ENCODE measurements at regions of chr10 and their contacts with region 1.

Region 1: DNA sequence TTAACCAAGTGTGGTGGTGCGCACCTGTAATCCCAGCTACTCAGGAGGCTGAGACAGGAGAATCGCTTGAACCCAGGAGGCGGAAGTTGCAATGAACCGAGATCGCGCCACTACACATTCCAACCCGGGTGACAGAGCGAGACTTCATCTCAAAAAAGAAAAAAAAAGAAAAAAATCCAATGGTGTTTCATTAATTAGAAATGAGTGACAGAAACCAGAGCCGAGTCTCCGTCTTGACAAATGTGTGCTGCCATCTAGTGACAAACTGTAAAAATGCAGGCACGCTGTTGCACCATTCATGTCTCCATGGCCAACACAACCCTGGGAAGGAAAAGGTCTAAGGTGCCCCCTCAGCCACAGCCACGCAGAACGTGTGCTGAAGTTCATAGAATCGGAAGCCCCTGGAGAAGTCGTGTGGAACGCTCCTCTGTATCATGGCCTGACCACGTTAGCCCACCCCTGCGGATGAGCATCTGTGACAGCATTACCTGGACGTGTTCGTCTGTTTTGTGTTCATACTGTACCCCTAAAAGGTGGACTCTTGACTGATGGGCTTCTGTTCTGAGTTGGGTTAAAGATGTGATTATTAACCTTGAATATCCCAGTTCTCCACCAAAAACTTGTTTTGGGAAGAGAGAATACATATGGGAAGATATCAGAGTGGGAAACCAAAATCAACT is 94.9 kb downstream of the LYZL2 start:
- DNase-seq: peak; percentile 46 to 60
- H3K4me3 ChIP-seq: no peak overlapping the region
- H3K27ac ChIP-seq: no peak overlapping the region
- H3K4me1 ChIP-seq: no peaks in the 10 kb centered on the region
- H3K27me3 ChIP-seq: no peaks in the 10 kb centered on the region
- CTCF ChIP-seq: peak; percentile 87

Region 2: GRCh38 chr10:29239569-29240472 is 1294.8 kb before region 1 on chr10:
- CTCF ChIA-PET with region 1: interaction called, 16 read pairs
- POLR2A ChIA-PET with region 1: no interaction called
- intact Hi-C with region 1: no loop called
- DNase-seq: no peak
- H3K4me3 ChIP-seq: no peak overlapping the region
- H3K27ac ChIP-seq: no peak overlapping the region
- H3K4me1 ChIP-seq: no peaks in the 10 kb centered on the region
- H3K27me3 ChIP-seq: no peaks in the 10 kb centered on the region
- CTCF ChIP-seq: peak; percentile 49

Region 3: DNA sequence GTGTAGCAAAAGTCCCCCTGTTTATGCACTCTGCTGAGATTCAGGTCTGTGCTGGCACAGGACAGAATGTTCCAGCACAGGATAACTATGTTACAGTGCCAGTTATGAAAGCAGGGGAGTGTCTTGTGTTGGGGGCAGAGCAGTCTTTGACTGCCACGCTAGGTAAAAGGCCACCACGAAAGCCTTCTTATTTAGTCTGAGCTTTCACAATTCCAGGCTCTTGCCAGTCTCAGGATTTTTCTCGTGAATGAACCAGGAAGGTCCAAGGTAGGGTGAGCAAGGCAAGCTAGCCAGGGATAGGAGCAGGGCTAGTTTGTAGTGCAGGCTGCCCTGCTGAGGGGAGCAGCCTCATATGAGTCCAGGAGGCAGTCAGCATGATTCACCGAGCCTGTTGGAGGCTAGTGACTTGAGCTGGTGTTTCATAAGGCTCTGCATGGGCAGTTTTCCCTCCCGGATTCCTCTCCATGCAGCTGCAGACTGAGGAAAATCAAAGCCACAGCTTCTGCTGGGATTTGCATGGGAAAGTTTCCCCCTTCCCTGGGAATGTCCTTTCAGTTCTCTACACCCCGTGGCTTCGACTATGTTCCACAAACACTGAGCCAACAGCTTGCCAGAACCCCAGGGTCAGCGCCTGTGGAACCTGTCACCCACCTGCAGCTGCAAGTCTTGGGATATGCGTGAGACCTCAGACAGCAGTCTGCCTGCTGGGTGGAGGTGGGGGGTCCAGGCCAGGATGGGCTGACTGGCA is 587.5 kb before region 1 on chr10:
- CTCF ChIA-PET with region 1: no interaction called
- POLR2A ChIA-PET with region 1: no interaction called
- intact Hi-C with region 1: no loop called
- DNase-seq: peak; percentile 48 to 84
- H3K4me3 ChIP-seq: no peak overlapping the region
- H3K27ac ChIP-seq: peak overlapping the region; percentile 91
- H3K4me1 ChIP-seq: peaks cover 51% of the 10 kb centered on the region
- H3K27me3 ChIP-seq: no peaks in the 10 kb centered on the region
- CTCF ChIP-seq: no peak

Region 4: DNA sequence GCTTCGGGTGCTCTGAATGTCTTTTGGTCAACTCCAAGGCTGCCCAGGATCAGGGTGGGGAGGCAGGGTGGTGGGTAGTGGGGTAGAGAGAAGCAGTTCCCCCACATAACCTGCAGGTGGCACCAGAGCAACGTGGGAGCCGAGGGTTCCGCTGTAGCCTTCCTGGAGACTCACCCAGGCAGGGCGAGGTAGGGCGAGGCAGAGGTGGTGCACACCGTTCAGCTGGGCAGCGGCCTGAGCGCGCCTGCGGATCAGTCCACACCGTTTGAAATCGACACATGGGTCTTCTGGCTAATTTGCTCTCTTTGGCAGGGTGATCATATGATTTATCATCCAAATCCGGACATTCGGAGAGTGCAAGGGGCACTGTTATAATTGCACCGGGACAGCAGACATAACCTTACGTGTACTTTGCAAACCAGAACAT is 142.0 kb before region 1 on chr10:
- CTCF ChIA-PET with region 1: interaction called, 4 read pairs
- POLR2A ChIA-PET with region 1: no interaction called
- intact Hi-C with region 1: loop called (anchors 1 kb)
- DNase-seq: peak in 1 of 2 experiments; percentile 72
- H3K4me3 ChIP-seq: no peak overlapping the region
- H3K27ac ChIP-seq: no peak overlapping the region
- H3K4me1 ChIP-seq: no peaks in the 10 kb centered on the region
- H3K27me3 ChIP-seq: no peaks in the 10 kb centered on the region
- CTCF ChIP-seq: peak; percentile 87

Region 5: GRCh38 chr10:30413996-30414576 is 120.5 kb before region 1 on chr10:
- CTCF ChIA-PET with region 1: interaction called, 4 read pairs
- POLR2A ChIA-PET with region 1: no interaction called
- intact Hi-C with region 1: loop called (anchors 1 kb)
- DNase-seq: peak; percentile 25 to 63
- H3K4me3 ChIP-seq: no peak overlapping the region
- H3K27ac ChIP-seq: no peak overlapping the region
- H3K4me1 ChIP-seq: peaks cover 13% of the 10 kb centered on the region
- H3K27me3 ChIP-seq: no peaks in the 10 kb centered on the region
- CTCF ChIP-seq: peak; percentile 74

Region 6: DNA sequence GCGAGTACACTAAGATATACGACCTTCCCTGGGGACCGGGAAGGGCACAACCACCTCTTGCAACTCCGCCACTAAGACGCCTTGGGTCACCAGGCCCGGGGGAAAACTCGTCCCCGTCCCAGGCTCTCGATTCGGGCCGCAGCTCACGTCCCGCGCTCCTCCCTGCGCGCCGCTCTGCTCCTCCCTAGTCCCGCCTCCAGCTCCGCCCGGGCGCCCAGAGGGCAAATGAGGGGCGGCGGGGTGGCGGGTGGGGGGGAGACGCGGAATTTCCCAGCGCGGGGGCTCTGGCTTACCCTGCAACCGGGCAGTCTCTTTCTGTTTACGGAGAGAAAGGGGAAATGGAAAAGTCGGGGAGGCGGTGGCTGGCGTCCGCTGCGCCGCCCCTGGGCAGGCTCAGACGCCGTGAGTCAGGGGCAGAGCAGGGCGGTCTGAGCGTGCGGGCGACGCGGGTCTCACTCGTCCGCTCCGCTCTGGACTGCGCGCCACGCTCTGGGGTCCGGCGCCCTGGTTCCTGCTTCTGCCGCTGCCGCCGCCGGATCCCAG is 100.8 kb before region 1 on chr10 and contains the start of gene MAP3K8:
- CTCF ChIA-PET with region 1: no interaction called
- POLR2A ChIA-PET with region 1: interaction called, 3 read pairs
- intact Hi-C with region 1: loop called (anchors 5 kb)
- DNase-seq: peak; percentile 73 to 94
- H3K4me3 ChIP-seq: peak within 1 kb of the TSS; percentile 95
- H3K27ac ChIP-seq: peak within 1 kb of the TSS; percentile 95
- H3K4me1 ChIP-seq: peaks cover 67% of the 10 kb centered on the region
- H3K27me3 ChIP-seq: no peaks in the 10 kb centered on the region
- CTCF ChIP-seq: no peak
- total RNA-seq, gene MAP3K8: 14.3 and 16.4 TPM in 2 replicates

Region 7: DNA sequence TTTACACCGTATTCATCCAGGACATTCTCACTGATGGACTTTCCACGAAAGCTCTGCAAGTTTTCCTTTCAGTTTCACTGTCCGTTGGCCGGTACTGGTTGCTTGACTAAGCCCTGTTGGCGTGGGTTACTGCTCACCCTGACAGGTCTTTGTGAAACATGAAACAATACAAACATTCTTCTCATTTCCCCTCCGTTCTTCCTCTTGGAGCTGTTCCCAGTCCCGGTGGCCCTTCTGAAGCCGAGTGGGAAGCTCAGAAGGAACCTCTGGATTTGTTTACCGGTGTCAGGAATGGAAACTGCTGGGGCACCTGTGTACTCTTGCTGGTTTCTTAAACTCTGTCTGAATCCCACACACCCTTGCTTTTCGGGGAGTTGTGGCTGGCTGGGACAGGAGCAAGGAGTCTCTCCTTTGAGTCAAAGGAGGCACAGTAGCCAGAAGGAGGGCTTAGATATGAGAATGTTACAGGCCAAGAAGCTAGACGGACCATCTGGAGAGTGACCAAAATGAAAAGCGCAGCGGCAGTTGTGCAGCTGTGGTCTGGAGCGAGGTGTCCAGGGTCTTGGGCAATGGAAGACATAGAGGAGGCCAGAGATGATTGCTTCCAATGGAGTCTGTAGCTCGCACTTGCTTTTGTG is 49.3 kb after region 1 on chr10:
- CTCF ChIA-PET with region 1: no interaction called
- POLR2A ChIA-PET with region 1: no interaction called
- intact Hi-C with region 1: loop called (anchors 5 kb)
- DNase-seq: peak; percentile 74 to 83
- H3K4me3 ChIP-seq: peak overlapping the region; percentile 52; the same call in 1 of the 2 replicates
- H3K27ac ChIP-seq: peak overlapping the region; percentile 75
- H3K4me1 ChIP-seq: peaks cover 15% of the 10 kb centered on the region
- H3K27me3 ChIP-seq: no peaks in the 10 kb centered on the region
- CTCF ChIP-seq: no peak

Region 8: GRCh38 chr10:30591249-30591670 is 56.7 kb after region 1 on chr10:
- CTCF ChIA-PET with region 1: no interaction called
- POLR2A ChIA-PET with region 1: no interaction called
- intact Hi-C with region 1: loop called (anchors 2 kb)
- DNase-seq: peak; percentile 33 to 36
- H3K4me3 ChIP-seq: no peak overlapping the region
- H3K27ac ChIP-seq: no peak overlapping the region
- H3K4me1 ChIP-seq: no peaks in the 10 kb centered on the region
- H3K27me3 ChIP-seq: no peaks in the 10 kb centered on the region
- CTCF ChIP-seq: peak; percentile 76

Region 9: DNA sequence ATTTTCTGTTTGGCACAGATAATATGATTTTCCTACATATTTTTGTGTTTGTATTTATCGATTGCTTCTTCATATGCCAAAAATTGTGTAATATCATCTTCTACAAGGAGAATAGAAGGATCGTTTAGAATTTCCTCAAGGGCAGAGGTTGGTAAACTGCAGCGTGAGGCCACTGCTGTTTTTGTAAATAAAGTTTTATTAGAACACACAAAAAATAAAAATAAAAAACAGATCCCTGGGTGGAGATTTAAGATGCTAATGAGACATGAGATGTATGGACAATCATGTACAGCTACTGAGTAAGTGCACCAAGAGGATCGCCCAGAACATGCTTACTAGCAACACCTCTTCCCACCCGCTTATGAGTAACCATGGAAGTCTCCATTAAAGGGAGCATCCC is 85.4 kb after region 1 on chr10:
- CTCF ChIA-PET with region 1: no interaction called
- POLR2A ChIA-PET with region 1: no interaction called
- intact Hi-C with region 1: no loop called
- DNase-seq: no peak
- H3K4me3 ChIP-seq: no peak overlapping the region
- H3K27ac ChIP-seq: no peak overlapping the region
- H3K4me1 ChIP-seq: no peaks in the 10 kb centered on the region
- H3K27me3 ChIP-seq: no peaks in the 10 kb centered on the region
- CTCF ChIP-seq: no peak

Region 10: DNA sequence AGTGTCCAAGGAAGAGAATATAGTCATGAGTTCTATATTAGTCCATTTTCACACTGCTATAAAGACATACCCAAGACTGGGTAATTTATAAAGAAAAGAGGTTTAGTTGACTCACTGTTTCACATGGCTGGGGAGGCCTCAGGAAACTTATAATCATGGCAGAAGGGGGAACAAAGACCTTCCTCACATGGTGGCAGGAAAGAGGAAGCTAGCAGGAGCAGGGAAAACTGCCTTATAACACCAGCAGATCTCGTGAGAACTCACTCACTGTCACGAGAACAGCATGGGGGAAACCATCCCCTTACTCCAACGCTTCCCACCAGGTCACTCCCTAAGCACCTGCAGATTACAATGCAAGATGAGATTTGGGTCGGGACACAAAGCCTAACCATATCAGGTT is 636.0 kb after region 1 on chr10:
- CTCF ChIA-PET with region 1: no interaction called
- POLR2A ChIA-PET with region 1: no interaction called
- intact Hi-C with region 1: no loop called
- DNase-seq: no peak
- H3K4me3 ChIP-seq: no peak overlapping the region
- H3K27ac ChIP-seq: no peak overlapping the region
- H3K4me1 ChIP-seq: no peaks in the 10 kb centered on the region
- H3K27me3 ChIP-seq: no peaks in the 10 kb centered on the region
- CTCF ChIP-seq: no peak